CD4-positive, alpha-beta memory T cell (primary cell): ENCODE measurements at regions of chr17 and their contacts with region 1.

Region 1: GRCh38 chr17:1870592-1870991 is 40.8 kb downstream of the RPA1 start:
- DNase-seq: peak; percentile 59 to 84 (median 76)
- H3K4me3 ChIP-seq: peak overlapping the region in 1 of 2 donors; percentile 12
- H3K4me3 Mint-ChIP-seq: peak overlapping the region; percentile 75 to 88 (median 84)
- H3K27ac ChIP-seq: peak overlapping the region; percentile 65
- H3K27ac Mint-ChIP-seq: peak overlapping the region; percentile 92 to 99 (median 98)
- H3K4me1 ChIP-seq: peaks cover 62% of the 10 kb centered on the region
- H3K4me1 Mint-ChIP-seq: peaks cover 46 to 75% (median 55%) of the 10 kb centered on the region in 4 donors
- H3K27me3 ChIP-seq: no peaks in the 10 kb centered on the region
- H3K27me3 Mint-ChIP-seq: no peaks in the 10 kb centered on the region

Region 2: GRCh38 chr17:2023692-2024571 is 153.3 kb after region 1 on chr17:
- CTCF ChIA-PET with region 1: no interaction called
- POLR2A ChIA-PET with region 1: interaction called, 5 read pairs
- intact Hi-C with region 1: loop called (anchors 5 kb)
- DNase-seq: peak; percentile 50 to 78 (median 61)
- H3K4me3 ChIP-seq: peak overlapping the region in 1 of 2 donors; percentile 57
- H3K4me3 Mint-ChIP-seq: peak overlapping the region; percentile 74 to 88 (median 80)
- H3K27ac ChIP-seq: peak overlapping the region; percentile 9
- H3K27ac Mint-ChIP-seq: peak overlapping the region in 1 of 7 donors; percentile 64
- H3K4me1 ChIP-seq: peaks cover 24% of the 10 kb centered on the region
- H3K4me1 Mint-ChIP-seq: peaks cover 7 to 29% (median 15%) of the 10 kb centered on the region in 4 donors
- H3K27me3 ChIP-seq: no peaks in the 10 kb centered on the region
- H3K27me3 Mint-ChIP-seq: peaks cover 8 to 12% of the 10 kb centered on the region in 2 donors

Region 3: DNA sequence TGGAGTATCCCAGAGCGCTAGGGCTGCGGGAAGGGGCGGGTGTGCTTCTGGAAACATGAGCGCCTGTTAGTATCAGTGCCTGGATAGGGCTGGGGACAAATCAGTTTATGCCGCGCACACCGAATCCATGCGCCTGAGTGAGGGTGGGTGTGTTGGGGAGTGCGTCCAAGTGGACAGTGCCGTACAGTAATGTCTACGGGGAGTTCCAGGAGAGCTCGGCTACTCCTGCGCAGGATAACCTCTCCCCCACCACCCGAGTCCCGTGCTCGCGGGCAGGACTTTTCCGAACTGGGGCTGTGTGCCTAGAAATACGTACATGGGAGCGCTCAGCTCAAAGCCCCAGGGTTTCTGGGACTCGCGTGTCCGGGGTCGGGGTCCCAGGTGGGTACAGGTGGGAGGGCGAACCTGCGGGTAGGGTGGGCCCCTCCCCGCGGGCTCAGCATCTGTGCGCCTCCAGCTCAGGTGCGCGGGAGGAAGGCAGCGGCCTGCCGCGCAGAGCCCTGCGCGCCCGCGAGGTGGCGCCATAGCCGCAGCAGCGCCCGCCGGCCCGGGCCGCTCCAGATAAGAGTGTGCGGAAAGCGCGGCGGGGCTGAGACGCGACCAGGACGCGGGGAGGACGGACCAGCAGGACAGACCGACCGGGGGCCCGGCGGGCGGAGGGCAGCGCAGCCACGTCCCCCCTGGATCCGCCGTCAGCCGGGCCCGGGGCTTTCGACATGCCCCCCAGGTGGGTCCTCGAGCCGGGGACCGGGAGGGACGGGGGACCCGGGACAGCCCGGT is 184.1 kb after region 1 on chr17 and contains the start of gene HIC1:
- CTCF ChIA-PET with region 1: no interaction called
- POLR2A ChIA-PET with region 1: no interaction called
- intact Hi-C with region 1: no loop called
- DNase-seq: peak; percentile 74 to 86 (median 83)
- H3K4me3 ChIP-seq: peak within 1 kb of the TSS; percentile 47 to 63
- H3K4me3 Mint-ChIP-seq: peak within 1 kb of the TSS; percentile 79 to 91 (median 83)
- H3K27ac ChIP-seq: peak within 1 kb of the TSS; percentile 71
- H3K27ac Mint-ChIP-seq: peak within 1 kb of the TSS; percentile 87 to 96 (median 92)
- H3K4me1 ChIP-seq: peaks cover 30% of the 10 kb centered on the region
- H3K4me1 Mint-ChIP-seq: peaks cover 13 to 34% (median 21%) of the 10 kb centered on the region in 4 donors
- H3K27me3 ChIP-seq: no peaks in the 10 kb centered on the region
- H3K27me3 Mint-ChIP-seq: no peaks in the 10 kb centered on the region
- total RNA-seq, gene HIC1: 4.9 to 5.2 TPM

Region 4: GRCh38 chr17:2207815-2208515 is 337.4 kb after region 1 on chr17:
- CTCF ChIA-PET with region 1: no interaction called
- POLR2A ChIA-PET with region 1: no interaction called
- intact Hi-C with region 1: loop called (anchors 1 kb)
- DNase-seq: no peak
- H3K4me3 ChIP-seq: no peak overlapping the region
- H3K4me3 Mint-ChIP-seq: no peak overlapping the region
- H3K27ac ChIP-seq: no peak overlapping the region
- H3K27ac Mint-ChIP-seq: peak overlapping the region in 3 of 7 donors; percentile 22 to 66 (median 29)
- H3K4me1 ChIP-seq: peaks cover 24% of the 10 kb centered on the region
- H3K4me1 Mint-ChIP-seq: peaks cover 21 to 35% (median 25%) of the 10 kb centered on the region in 4 donors
- H3K27me3 ChIP-seq: no peaks in the 10 kb centered on the region
- H3K27me3 Mint-ChIP-seq: no peaks in the 10 kb centered on the region